HepG2 (cell line): ENCODE measurements at regions of chr6 and their contacts with region 1.

Region 1: DNA sequence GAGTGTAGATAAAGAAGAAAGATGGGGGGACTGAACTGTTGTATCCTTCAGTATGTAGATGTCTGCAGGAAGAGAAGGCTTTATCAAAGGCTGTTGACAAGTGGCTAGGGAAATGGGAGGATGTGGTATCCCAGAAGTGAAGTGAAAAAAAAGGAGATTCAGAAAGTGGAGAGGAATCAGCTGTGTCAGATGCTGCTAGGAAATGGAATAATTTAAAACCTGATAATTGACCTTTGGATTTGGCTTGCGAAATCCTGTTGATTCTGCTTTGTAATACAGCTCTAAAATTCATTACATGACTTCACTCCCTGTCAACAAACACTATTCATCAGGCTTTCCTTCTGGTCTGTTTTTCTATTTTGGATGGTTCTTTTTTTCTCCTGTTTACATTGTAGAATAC is 41.7 kb downstream of the PHF3 start:
- DNase-seq: peak; percentile 78
- ATAC-seq: peak; percentile 66
- H3K4me3 ChIP-seq: no peak overlapping the region
- H3K27ac ChIP-seq: peak overlapping the region; percentile 20
- H3K4me1 ChIP-seq: peaks cover 47% of the 10 kb centered on the region
- H3K27me3 ChIP-seq: no peaks in the 10 kb centered on the region
- CTCF ChIP-seq: no peak
- EP300 ChIP-seq: peak in 1 of 2 experiments; percentile 59; a peak in 1 of 4 replicates
- POLR2A ChIP-seq: no peak
- RAD21 ChIP-seq: no peak

Region 2: GRCh38 chr6:62246087-62246486 is 1431.2 kb before region 1 on chr6:
- CTCF ChIA-PET with region 1: no interaction called
- POLR2A ChIA-PET with region 1: no interaction called
- in situ Hi-C with region 1: no loop called
- intact Hi-C with region 1: loop called (anchors 5 kb)
- DNase-seq: no peak
- ATAC-seq: no peak
- H3K4me3 ChIP-seq: no peak overlapping the region
- H3K27ac ChIP-seq: no peak overlapping the region
- H3K4me1 ChIP-seq: no peaks in the 10 kb centered on the region
- H3K27me3 ChIP-seq: no peaks in the 10 kb centered on the region
- CTCF ChIP-seq: no peak
- EP300 ChIP-seq: no peak
- POLR2A ChIP-seq: no peak
- RAD21 ChIP-seq: no peak

Region 3: DNA sequence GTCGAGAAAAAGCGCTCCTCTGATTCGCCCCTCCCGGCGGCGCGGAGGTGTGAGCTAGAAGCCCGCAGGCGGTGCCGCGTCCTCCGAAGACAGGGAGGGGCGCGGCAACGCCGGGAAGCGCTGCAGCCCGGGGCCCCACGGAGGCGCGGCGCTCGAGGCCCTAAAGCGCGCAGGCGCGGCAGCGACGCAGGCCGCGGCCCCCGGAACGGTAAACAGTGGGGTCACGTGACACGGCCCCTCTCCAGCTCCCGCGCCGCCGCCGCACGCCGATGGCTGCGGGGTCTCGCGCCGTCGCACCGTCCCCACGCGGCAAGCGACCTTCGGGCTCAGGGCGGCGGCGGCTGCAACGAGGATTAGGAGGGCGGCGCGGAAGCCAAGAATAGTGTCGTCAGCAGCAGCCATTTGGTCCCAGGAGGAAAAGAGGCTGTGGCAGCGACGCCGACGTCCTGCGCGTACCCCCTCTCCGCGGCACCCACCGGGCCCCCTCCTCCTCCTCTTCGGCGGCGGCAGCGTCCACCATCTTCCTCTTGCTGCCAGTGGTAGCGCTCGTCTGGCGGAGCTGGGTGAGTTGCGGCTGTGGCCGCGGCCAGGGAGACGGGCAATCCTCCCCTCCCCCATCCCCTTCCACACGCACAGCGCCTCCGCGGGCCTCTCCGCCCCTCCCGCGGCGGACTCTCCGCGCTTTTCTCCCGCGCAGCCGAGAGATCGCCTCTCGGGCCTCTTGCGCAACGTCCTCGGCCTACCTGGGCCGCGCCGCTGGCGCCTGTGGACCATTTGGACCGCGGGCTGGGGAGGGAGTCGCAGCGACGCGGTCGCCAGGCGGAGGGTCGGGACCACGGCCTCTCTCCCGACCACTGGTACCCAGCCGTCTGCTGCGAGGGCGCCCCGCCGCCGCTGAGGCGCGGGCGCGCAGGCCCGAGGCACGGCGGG is 41.4 kb before region 1 on chr6 and contains the start of gene PHF3:
- CTCF ChIA-PET with region 1: no interaction called
- POLR2A ChIA-PET with region 1: interaction called, 8 read pairs
- in situ Hi-C with region 1: no loop called
- intact Hi-C with region 1: loop called (anchors 5 kb)
- DNase-seq: peak; percentile 91
- ATAC-seq: peak; percentile 91
- H3K4me3 ChIP-seq: peak within 1 kb of the TSS; percentile 93 to 96 (median 95)
- H3K27ac ChIP-seq: peak within 1 kb of the TSS; percentile 96
- H3K4me1 ChIP-seq: peaks cover 51% of the 10 kb centered on the region
- H3K27me3 ChIP-seq: no peaks in the 10 kb centered on the region; a peak in 1 of 5 replicates
- CTCF ChIP-seq: peak; percentile 62
- EP300 ChIP-seq: peak; percentile 39 to 62
- POLR2A ChIP-seq: peak; percentile 79 to 85
- RAD21 ChIP-seq: peak; percentile 82
- total RNA-seq, gene PHF3: 70.4 and 96.2 TPM in 2 replicates